AG04450 (cell line): ENCODE measurements at regions of chr11 and their contacts with region 1.

Region 1: DNA sequence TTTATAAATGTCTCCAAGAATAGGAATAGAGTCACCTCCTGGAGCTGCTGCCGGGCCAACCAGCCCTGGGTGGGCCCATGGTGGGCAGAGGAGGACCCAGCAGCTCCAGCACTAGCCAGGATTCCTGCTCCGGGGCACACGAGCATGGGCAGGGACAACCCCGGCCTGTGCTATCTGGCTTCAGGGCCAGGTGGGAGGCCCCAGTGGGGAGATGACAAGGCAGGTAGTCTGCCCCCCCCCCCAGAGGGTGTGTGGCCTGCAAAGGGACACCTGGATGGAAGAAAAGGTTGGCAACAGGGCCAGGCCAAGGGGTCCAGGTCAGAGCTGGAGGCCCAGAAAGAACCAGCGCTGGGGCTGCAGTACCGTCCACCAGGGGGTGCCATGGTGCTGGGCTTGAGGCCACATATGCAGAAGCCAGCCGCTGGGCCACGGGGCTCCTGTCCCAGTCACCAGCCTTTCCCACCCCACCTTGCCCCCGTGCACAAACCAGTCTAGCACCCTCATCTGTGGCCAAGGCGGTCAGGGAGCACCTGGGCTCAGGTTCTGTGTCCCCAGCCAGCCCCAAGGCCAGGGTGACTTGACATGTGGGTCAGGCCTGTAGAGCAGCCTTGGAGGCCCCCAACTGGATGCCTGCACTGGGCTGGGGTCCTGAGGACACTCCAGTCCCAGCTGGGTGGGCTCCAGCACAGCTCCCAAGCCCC is 3.5 kb downstream of the TSPAN32 start:
- DNase-seq: no peak
- H3K4me3 ChIP-seq: peak overlapping the region; percentile 27; the same call in 1 of the 2 replicates
- H3K27ac ChIP-seq: peak overlapping the region; percentile 95
- H3K27me3 ChIP-seq: no peaks in the 10 kb centered on the region
- CTCF ChIP-seq: peak; percentile 71

Region 2: GRCh38 chr11:1335811-1336761 is 969.2 kb before region 1 on chr11:
- CTCF ChIA-PET with region 1: no interaction called
- POLR2A ChIA-PET with region 1: no interaction called
- DNase-seq: peak; percentile 36
- H3K4me3 ChIP-seq: peak overlapping the region; percentile 61
- H3K27ac ChIP-seq: no peak overlapping the region
- H3K27me3 ChIP-seq: peaks cover 6% of the 10 kb centered on the region
- CTCF ChIP-seq: no peak

Region 3: GRCh38 chr11:2196970-2197770 is 108.1 kb before region 1 on chr11:
- CTCF ChIA-PET with region 1: interaction called, 15 read pairs
- POLR2A ChIA-PET with region 1: no interaction called
- DNase-seq: peak; percentile 20
- H3K4me3 ChIP-seq: no peak overlapping the region
- H3K27ac ChIP-seq: no peak overlapping the region
- H3K27me3 ChIP-seq: peaks cover 11% of the 10 kb centered on the region
- CTCF ChIP-seq: peak; percentile 86

Region 4: GRCh38 chr11:2234963-2235362 is 70.3 kb before region 1 on chr11:
- CTCF ChIA-PET with region 1: no interaction called
- POLR2A ChIA-PET with region 1: no interaction called
- DNase-seq: no peak
- H3K4me3 ChIP-seq: no peak overlapping the region
- H3K27ac ChIP-seq: no peak overlapping the region
- H3K27me3 ChIP-seq: peaks cover 12% of the 10 kb centered on the region
- CTCF ChIP-seq: no peak

Region 5: DNA sequence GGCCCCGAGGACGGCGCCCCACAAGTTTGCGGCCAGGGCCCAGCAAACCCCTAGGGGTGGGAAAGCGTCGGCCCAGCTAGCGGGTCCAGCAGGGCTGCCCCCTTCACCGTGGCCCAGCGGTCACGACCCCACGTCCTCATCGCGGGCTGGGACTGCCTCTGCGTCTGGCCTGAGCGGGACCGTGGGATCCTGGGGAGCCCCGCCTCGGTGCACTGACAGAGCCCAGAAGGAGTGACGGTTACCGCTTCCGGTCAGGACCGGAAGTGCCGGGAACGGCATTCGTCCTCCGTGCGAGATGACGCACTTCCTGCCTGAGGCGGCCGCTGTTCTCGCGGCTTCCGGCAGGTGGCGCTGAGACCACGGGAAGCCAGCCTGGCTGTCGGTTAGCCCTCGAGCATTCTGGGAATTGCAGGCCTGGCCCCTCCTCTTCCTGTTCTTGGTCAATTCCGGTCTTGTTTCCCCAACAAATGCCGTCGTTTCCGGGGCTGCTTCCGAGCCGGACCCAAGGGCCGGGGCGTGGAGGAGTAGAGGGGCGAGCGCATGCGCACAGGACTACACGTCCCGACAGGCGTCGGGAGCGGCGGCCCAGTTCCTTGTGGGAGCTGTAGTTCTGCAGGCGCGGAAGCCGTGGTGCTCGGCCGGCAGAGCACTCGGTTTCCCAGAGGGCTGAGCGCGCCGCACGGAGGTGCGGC is 94.9 kb after region 1 on chr11 and contains the start of gene TSSC4:
- CTCF ChIA-PET with region 1: interaction called, 9 read pairs
- POLR2A ChIA-PET with region 1: interaction called, 10 read pairs
- DNase-seq: peak; percentile 100
- H3K4me3 ChIP-seq: peak within 1 kb of the TSS; percentile 91
- H3K27ac ChIP-seq: peak within 1 kb of the TSS; percentile 98
- H3K27me3 ChIP-seq: no peaks in the 10 kb centered on the region
- CTCF ChIP-seq: peak; percentile 97
- polyA plus RNA-seq, gene TSSC4: 13.3 and 19.2 TPM in 2 replicates